HepG2 (cell line): ENCODE measurements at regions of chr3 and their contacts with region 1.

Region 1: DNA sequence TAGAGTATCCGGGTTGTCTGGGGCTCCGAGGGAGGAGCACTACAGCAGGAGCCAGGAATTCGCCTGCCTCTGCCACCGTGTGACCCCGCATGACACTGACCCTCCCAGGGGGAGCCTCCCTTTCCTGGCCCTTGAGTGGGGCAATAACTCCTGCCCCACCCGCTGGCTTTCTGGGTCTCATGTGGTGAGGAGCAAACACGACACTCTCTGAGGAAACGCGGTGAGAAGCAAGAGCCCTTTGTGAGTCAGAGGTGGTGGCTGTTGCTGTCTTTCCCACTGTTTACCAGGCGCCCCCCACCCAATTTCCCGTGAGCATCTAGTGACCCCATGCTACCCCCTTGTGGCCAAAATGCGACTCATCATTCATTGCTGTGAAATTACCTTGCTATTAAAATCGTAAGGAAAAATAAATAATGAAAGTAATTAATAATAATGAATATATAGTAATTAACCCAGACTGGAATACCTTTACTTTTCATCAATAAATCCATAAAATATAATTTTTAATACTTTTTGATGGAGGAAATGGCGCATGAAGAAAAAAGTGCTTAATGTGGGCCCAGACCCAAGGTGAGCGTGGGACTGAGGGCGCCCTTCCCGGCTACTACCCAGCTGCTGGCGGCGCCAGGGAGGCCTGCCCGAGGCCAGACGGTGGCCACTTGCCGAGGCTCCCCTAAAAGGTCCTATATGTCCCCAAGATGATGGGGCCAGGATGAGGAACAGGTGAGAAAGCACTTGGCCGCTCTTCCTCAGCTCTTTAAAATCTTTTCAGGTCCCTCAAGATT is 29.3 kb downstream of the CCNL1 start:
- DNase-seq: peak; percentile 90
- ATAC-seq: peak; percentile 47
- H3K4me3 ChIP-seq: peak overlapping the region; percentile 53 to 76 (median 57)
- H3K27ac ChIP-seq: peak overlapping the region; percentile 96
- H3K4me1 ChIP-seq: peaks cover 95% of the 10 kb centered on the region
- H3K27me3 ChIP-seq: no peaks in the 10 kb centered on the region
- CTCF ChIP-seq: peak; percentile 80
- EP300 ChIP-seq: peak in 1 of 2 experiments; percentile 82; a peak in 2 of 4 replicates
- POLR2A ChIP-seq: peak in 1 of 2 experiments; percentile 50; a peak in 1 of 4 replicates
- RAD21 ChIP-seq: peak; percentile 82

Region 2: DNA sequence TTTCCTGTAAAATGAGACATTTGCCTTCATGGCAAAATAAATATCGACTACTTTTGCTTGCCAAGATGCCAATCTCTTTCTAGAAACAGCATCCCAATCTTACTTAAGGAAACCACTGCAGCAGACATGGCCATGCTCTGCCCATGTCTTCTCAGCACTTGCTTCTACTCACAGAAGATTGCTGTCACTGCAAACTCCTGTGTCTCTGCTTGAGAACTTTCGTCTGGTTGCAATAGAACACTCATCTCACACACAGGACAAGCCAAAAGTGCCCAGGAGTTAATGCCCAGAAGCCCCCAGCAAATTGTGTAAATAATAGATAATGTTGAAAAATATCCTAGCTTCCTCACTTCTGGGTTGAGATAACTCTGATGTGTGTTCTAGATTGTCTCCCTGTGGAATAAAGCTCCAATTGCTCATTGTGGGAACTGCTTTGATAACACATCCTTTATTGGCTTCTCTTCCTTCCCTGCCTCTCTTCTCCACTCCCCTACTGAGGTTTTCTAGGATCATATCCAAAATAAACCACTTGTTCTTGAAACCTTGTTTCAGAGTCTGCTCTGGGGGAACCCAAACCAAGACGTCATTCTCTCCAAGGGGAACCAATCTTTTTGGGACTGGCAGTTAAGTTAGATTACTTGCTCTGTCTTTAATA is 1680.9 kb before region 1 on chr3:
- CTCF ChIA-PET with region 1: no interaction called
- POLR2A ChIA-PET with region 1: no interaction called
- in situ Hi-C with region 1: no loop called
- intact Hi-C with region 1: no loop called
- DNase-seq: no peak
- ATAC-seq: no peak
- H3K4me3 ChIP-seq: no peak overlapping the region
- H3K27ac ChIP-seq: no peak overlapping the region
- H3K4me1 ChIP-seq: no peaks in the 10 kb centered on the region
- H3K27me3 ChIP-seq: no peaks in the 10 kb centered on the region
- CTCF ChIP-seq: no peak
- EP300 ChIP-seq: no peak
- POLR2A ChIP-seq: no peak
- RAD21 ChIP-seq: no peak

Region 3: DNA sequence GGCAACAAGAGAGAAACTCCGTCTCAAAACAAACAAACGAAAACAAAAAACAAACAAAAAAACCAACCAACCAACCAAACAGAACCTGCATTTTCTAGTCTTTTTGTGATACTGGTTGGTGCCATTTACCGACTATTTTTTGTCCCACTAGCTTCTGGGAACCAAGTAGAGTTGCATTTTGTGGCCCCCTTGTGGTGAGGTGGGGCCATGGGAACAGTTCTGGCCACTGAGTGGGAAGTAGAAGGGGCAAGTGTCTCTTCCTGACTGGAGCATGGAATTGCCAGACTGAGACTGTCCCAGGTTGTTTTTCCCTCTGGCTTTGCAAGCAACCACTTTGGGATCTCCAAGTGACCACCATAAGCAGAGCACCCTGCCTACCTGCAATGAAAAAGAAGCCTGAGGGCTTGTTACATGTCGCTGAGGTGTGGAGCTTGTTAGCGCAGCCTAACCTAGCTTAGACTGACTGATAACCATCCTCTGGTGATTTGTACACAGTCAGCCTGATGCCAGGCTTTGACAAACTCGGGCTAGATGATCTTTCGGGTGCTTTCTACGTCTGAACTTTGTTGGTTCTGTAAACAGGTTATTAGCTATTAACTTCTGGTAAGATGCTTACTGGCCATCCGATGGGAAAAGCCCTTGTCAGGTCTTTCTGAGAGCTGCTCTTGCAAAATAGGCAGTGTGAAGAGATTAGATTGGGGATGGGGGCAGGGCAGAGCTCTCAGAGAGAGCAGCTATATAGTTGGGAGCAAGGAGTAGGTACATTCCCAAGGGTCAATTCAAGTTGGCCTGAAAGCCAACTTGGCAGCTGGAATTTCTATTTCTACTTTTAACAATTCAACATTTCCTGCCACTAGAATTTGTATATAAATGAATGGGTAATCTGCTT is 748.0 kb before region 1 on chr3:
- CTCF ChIA-PET with region 1: no interaction called
- POLR2A ChIA-PET with region 1: no interaction called
- in situ Hi-C with region 1: no loop called
- intact Hi-C with region 1: loop called (anchors 10 kb)
- DNase-seq: peak; percentile 24
- ATAC-seq: peak; percentile 96
- H3K4me3 ChIP-seq: no peak overlapping the region
- H3K27ac ChIP-seq: no peak overlapping the region
- H3K4me1 ChIP-seq: no peaks in the 10 kb centered on the region
- H3K27me3 ChIP-seq: 0 out of 5 replicates have a peak, but pooled peaks cover 0 to 3% of the 10 kb centered on the region in 2 experiments
- CTCF ChIP-seq: peak; percentile 77
- EP300 ChIP-seq: no peak
- POLR2A ChIP-seq: no peak
- RAD21 ChIP-seq: peak; percentile 70

Region 4: DNA sequence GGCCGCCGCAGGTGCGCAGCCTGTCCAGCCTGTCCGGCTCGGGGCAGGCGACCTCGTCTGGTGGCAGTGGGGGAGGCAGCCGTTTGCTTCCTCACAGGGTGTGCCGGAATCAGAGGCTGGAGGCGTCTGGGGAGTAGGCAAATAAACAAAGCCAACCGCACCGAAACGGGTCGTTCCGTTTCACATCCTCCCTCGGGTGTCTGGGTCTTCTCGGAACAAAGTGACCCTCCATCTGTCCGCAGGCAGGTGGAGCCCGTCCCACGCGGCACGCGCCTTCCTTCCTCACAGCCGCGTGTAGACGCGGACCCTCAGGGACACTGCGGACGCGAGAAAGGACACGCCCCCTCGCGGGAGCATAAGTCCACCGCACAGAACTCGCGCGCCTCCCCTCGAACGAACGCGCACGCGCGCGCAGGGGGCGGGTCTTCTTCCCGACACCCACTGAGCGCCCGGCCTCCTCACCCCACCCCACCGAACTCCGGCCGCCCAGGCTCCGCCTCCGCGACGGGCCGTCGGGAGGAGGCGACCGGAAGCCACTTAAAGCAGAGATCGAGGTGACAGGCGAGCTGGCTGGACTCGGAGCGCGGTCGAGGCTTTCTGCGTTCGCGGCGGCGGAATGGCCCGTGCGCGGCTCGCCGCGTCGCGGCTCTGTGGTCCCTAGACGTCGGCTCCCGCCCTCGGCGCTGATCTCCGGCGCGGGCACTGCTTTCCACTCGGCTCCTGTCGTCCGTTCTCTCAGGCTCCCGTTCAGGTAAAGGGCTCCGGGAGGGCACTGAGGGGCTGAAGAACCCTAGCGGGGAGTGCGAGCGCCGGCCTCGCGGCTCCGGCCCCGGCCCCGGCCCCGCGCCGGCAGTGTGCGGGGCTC is 456.4 kb before region 1 on chr3 and contains the start of gene TIPARP:
- CTCF ChIA-PET with region 1: interaction called, 5 read pairs
- POLR2A ChIA-PET with region 1: interaction called, 24 read pairs
- in situ Hi-C with region 1: loop called (anchors 10 kb)
- intact Hi-C with region 1: loop called (anchors 1 kb)
- DNase-seq: peak; percentile 92
- ATAC-seq: peak; percentile 92
- H3K4me3 ChIP-seq: peak within 1 kb of the TSS; percentile 76 to 96 (median 82)
- H3K27ac ChIP-seq: peak within 1 kb of the TSS; percentile 89
- H3K4me1 ChIP-seq: peaks cover 44% of the 10 kb centered on the region
- H3K27me3 ChIP-seq: no peaks in the 10 kb centered on the region
- CTCF ChIP-seq: peak; percentile 90
- EP300 ChIP-seq: peak in 1 of 2 experiments; percentile 14; a peak in 1 of 4 replicates
- POLR2A ChIP-seq: peak; percentile 98 to 99
- RAD21 ChIP-seq: peak; percentile 92
- total RNA-seq, gene TIPARP: 19.7 and 25.4 TPM in 2 replicates

Region 5: DNA sequence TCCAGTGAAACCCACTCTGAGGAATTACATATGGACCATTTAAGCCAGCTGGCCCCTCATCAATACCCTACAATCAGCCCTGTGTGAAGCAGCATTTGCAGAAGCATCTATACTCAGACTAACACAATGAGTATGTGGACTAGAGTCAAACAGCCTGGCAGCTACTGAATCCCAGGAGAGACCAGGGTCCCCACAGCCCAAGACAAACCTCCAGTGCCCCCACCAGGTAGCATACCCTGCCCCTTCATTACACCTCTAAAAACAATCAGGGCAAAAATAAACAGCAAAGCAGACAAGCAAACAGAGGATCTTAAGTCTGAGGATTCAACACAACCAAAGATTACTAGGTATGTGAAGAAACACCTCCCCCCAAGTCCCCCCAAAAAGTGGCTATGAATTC is 147.1 kb before region 1 on chr3:
- CTCF ChIA-PET with region 1: no interaction called
- POLR2A ChIA-PET with region 1: no interaction called
- in situ Hi-C with region 1: no loop called
- intact Hi-C with region 1: loop called (anchors 10 kb)
- DNase-seq: no peak
- ATAC-seq: no peak
- H3K4me3 ChIP-seq: no peak overlapping the region
- H3K27ac ChIP-seq: no peak overlapping the region
- H3K4me1 ChIP-seq: no peaks in the 10 kb centered on the region
- H3K27me3 ChIP-seq: no peaks in the 10 kb centered on the region
- CTCF ChIP-seq: no peak
- EP300 ChIP-seq: no peak
- POLR2A ChIP-seq: no peak
- RAD21 ChIP-seq: no peak

Region 6: GRCh38 chr3:157051055-157051454 is 79.6 kb before region 1 on chr3:
- CTCF ChIA-PET with region 1: no interaction called
- POLR2A ChIA-PET with region 1: no interaction called
- in situ Hi-C with region 1: no loop called
- intact Hi-C with region 1: no loop called
- DNase-seq: no peak
- ATAC-seq: no peak
- H3K4me3 ChIP-seq: no peak overlapping the region
- H3K27ac ChIP-seq: no peak overlapping the region
- H3K4me1 ChIP-seq: no peaks in the 10 kb centered on the region
- H3K27me3 ChIP-seq: no peaks in the 10 kb centered on the region
- CTCF ChIP-seq: no peak
- EP300 ChIP-seq: no peak
- POLR2A ChIP-seq: no peak
- RAD21 ChIP-seq: no peak

Region 7: GRCh38 chr3:157088601-157089454 is 41.8 kb before region 1 on chr3:
- CTCF ChIA-PET with region 1: no interaction called
- POLR2A ChIA-PET with region 1: interaction called, 204 read pairs
- in situ Hi-C with region 1: loop called (anchors 5 kb)
- intact Hi-C with region 1: loop called (anchors 1 kb)
- DNase-seq: peak; percentile 91
- ATAC-seq: peak; percentile 93
- H3K4me3 ChIP-seq: peak overlapping the region; percentile 56 to 67 (median 58)
- H3K27ac ChIP-seq: peak overlapping the region; percentile 96
- H3K4me1 ChIP-seq: peaks cover 43% of the 10 kb centered on the region
- H3K27me3 ChIP-seq: no peaks in the 10 kb centered on the region
- CTCF ChIP-seq: peak; percentile 54
- EP300 ChIP-seq: peak in 1 of 2 experiments; percentile 72; a peak in 1 of 4 replicates
- POLR2A ChIP-seq: peak; percentile 49 to 83
- RAD21 ChIP-seq: 0 out of 2 replicates have a peak, but pooled peaks have one; percentile 35

Region 8: GRCh38 chr3:157113832-157114505 is 16.7 kb before region 1 on chr3:
- CTCF ChIA-PET with region 1: no interaction called
- POLR2A ChIA-PET with region 1: interaction called, 53 read pairs
- in situ Hi-C with region 1: no loop called
- intact Hi-C with region 1: no loop called
- DNase-seq: no peak
- ATAC-seq: peak; percentile 70
- H3K4me3 ChIP-seq: no peak overlapping the region
- H3K27ac ChIP-seq: no peak overlapping the region
- H3K4me1 ChIP-seq: peaks cover 42% of the 10 kb centered on the region
- H3K27me3 ChIP-seq: no peaks in the 10 kb centered on the region
- CTCF ChIP-seq: no peak
- EP300 ChIP-seq: no peak
- POLR2A ChIP-seq: no peak
- RAD21 ChIP-seq: no peak

Region 9: DNA sequence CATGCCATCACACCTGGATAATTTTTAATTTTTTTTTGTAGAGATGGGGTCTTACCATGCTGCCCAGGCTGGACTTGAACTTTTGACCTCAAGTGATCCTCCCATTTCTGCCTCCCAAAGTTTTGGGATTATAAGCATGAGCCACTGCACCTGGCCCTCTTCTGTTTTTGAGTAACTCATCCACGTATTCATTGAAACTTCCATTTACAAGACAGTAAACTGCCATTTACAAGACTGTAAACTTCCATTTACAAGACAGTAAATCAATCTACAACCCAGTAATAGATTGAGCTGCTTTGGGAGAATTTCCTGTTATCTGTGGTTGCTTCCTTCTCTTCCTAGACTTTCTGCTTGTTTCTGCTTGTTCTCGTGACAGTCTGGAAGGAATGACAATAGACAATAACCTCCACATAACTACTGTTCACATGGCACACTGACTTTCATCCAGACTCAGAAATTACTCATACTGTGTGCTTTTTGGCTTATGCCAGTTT is 144.0 kb after region 1 on chr3:
- CTCF ChIA-PET with region 1: no interaction called
- POLR2A ChIA-PET with region 1: no interaction called
- in situ Hi-C with region 1: no loop called
- intact Hi-C with region 1: no loop called
- DNase-seq: no peak
- ATAC-seq: no peak
- H3K4me3 ChIP-seq: no peak overlapping the region
- H3K27ac ChIP-seq: no peak overlapping the region
- H3K4me1 ChIP-seq: no peaks in the 10 kb centered on the region
- H3K27me3 ChIP-seq: 0 out of 5 replicates have a peak, but pooled peaks cover 0 to 3% of the 10 kb centered on the region in 2 experiments
- CTCF ChIP-seq: no peak
- EP300 ChIP-seq: no peak
- POLR2A ChIP-seq: no peak
- RAD21 ChIP-seq: no peak